Naive thymus-derived CD8-positive, alpha-beta T cell (primary cell): ENCODE measurements at regions of chr16 and their contacts with region 1.

Region 1: GRCh38 chr16:11586856-11587642 is at the start of gene LITAF:
- DNase-seq: peak; percentile 38 to 78 (median 62)
- ATAC-seq: peak; percentile 64 to 66
- H3K4me3 Mint-ChIP-seq: peak within 1 kb of the TSS; percentile 90 to 100 (median 93)
- H3K27ac Mint-ChIP-seq: peak within 1 kb of the TSS; percentile 92 to 98 (median 96)
- H3K4me1 Mint-ChIP-seq: peaks cover 22 to 54% (median 41%) of the 10 kb centered on the region in 4 donors
- H3K27me3 Mint-ChIP-seq: no peaks in the 10 kb centered on the region
- polyA plus RNA-seq, gene LITAF: 553 to 770 (median 597) TPM

Region 2: GRCh38 chr16:11470676-11471415 is 116.2 kb before region 1 on chr16:
- POLR2A ChIA-PET with region 1: no interaction called
- DNase-seq: no peak
- ATAC-seq: no peak
- H3K4me3 Mint-ChIP-seq: no peak overlapping the region
- H3K27ac Mint-ChIP-seq: no peak overlapping the region
- H3K4me1 Mint-ChIP-seq: no peaks in the 10 kb centered on the region
- H3K27me3 Mint-ChIP-seq: no peaks in the 10 kb centered on the region

Region 3: DNA sequence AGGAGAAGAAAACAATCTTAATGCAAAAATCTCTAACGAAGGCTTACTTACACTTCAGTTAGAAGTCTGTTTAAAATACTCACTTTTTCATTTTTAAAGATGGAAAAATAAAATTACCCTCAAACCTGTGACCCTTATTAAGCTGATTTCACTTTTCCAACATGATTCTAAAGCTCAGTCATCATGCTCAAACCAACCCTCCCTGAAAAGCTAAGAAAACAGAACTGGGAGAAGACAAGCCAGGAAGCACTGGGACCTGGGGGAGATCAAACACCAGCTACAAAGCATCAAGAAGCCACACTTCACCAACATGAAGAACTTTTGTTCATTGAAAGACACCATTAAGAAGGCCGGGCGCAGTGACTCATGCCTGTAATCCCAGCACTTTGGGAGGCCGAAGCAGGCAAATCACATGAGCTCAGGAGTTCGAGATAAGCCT is 89.2 kb before region 1 on chr16:
- POLR2A ChIA-PET with region 1: no interaction called
- DNase-seq: peak in 2 of 10 donors; percentile 6 to 9
- ATAC-seq: peak in 1 of 2 donors; percentile 43
- H3K4me3 Mint-ChIP-seq: peak overlapping the region in 5 of 10 donors; percentile 48 to 71 (median 68)
- H3K27ac Mint-ChIP-seq: peak overlapping the region; percentile 36 to 89 (median 76)
- H3K4me1 Mint-ChIP-seq: peaks cover 13 to 42% (median 33%) of the 10 kb centered on the region in 4 donors
- H3K27me3 Mint-ChIP-seq: no peaks in the 10 kb centered on the region

Region 4: GRCh38 chr16:11560701-11561449 is 26.2 kb before region 1 on chr16:
- POLR2A ChIA-PET with region 1: interaction called, 17 read pairs
- DNase-seq: peak; percentile 41 to 92 (median 85)
- ATAC-seq: peak; percentile 88 to 90
- H3K4me3 Mint-ChIP-seq: peak overlapping the region; percentile 78 to 94 (median 83)
- H3K27ac Mint-ChIP-seq: peak overlapping the region; percentile 95 to 100 (median 100)
- H3K4me1 Mint-ChIP-seq: peaks cover 41 to 90% (median 81%) of the 10 kb centered on the region in 4 donors
- H3K27me3 Mint-ChIP-seq: no peaks in the 10 kb centered on the region

Region 5: DNA sequence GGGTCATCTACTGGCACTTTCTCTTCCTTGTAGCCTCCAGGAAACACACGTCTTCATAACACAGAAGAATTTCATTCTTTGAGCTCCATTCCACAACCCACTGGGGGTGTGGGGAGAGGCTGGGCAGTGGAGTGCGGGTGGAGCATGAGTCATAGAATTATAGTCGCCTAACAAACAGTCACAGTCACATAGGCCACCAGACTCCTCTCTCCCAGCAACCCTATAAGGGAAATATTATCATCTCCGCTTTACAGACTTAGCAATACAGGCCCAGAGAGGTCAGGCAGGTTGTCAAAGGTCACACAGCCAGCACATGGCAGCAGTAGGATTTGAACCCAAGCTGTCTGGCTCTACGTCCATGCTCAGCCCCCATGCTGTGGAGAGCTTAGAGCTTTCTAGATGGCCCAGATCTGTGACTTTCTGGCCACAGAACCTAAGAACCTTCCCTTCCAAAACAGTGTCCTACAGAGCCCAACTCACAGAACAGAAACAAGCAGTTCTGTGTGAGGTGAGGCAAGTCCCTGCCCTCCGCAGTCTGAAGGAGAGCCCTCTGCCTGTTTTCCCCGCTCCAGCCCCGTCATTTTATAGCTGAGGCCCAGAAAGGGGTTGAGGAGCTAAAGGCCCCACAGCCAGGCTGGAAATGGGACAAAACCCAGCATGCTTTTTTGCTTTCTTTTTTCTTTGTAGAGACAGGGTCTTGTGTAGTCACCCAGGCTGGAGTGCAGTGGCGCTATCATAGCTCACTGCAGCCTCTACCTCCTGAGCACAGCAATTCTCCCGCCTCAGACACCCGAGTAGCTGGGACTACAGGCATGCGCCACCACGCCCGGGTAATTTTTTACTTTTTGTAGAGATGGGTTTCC is 10.4 kb after region 1 on chr16:
- POLR2A ChIA-PET with region 1: interaction called, 18 read pairs
- DNase-seq: peak in 1 of 10 donors; percentile 34
- ATAC-seq: peak; percentile 73 to 81
- H3K4me3 Mint-ChIP-seq: peak overlapping the region in 5 of 10 donors; percentile 10 to 52 (median 33)
- H3K27ac Mint-ChIP-seq: peak overlapping the region; percentile 63 to 92 (median 84)
- H3K4me1 Mint-ChIP-seq: peaks cover 13 to 31% (median 26%) of the 10 kb centered on the region in 4 donors
- H3K27me3 Mint-ChIP-seq: no peaks in the 10 kb centered on the region

Region 6: DNA sequence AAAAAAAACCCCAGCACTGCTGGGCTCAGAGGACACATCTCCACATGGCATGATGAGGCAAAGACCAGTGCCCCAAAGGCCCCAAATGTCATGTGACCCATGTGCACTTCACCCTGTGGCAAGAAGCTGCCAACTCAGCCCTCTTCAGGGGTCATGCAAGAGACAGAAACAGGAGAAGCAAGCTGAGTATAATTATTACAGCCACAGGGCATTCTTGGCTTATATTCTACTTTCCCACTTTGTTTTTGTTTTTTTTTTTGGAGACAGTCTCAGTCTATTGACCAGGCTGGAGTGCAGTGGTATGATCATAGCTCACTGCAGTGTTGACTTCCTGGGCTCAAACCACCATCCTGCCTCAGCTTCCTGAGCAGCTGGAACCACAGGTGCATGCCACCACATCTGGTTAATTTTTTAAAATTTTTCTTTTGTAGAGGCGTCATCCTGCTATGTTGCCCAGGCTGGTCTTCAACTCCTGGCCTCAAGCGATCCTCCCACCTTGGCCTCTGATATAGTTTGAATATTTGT is 32.3 kb after region 1 on chr16:
- POLR2A ChIA-PET with region 1: interaction called, 151 read pairs
- DNase-seq: peak in 6 of 10 donors; percentile 11 to 57 (median 42)
- ATAC-seq: peak; percentile 35 to 41
- H3K4me3 Mint-ChIP-seq: peak overlapping the region; percentile 44 to 91 (median 71)
- H3K27ac Mint-ChIP-seq: peak overlapping the region; percentile 90 to 100 (median 98)
- H3K4me1 Mint-ChIP-seq: peaks cover 26 to 86% (median 76%) of the 10 kb centered on the region in 4 donors
- H3K27me3 Mint-ChIP-seq: no peaks in the 10 kb centered on the region

Region 7: GRCh38 chr16:11675561-11676511 is 88.8 kb after region 1 on chr16:
- POLR2A ChIA-PET with region 1: no interaction called
- DNase-seq: peak in 1 of 10 donors; percentile 62
- ATAC-seq: no peak
- H3K4me3 Mint-ChIP-seq: peak overlapping the region in 2 of 10 donors; percentile 43 to 46
- H3K27ac Mint-ChIP-seq: peak overlapping the region; percentile 38 to 97 (median 84)
- H3K4me1 Mint-ChIP-seq: peaks cover 33 to 95% (median 81%) of the 10 kb centered on the region in 4 donors
- H3K27me3 Mint-ChIP-seq: no peaks in the 10 kb centered on the region